Natural killer cell (primary cell): ENCODE measurements at regions of chr15 and their contacts with region 1.

Region 1: GRCh38 chr15:67839929-67840748 is at the start of gene RNU6-1:
- DNase-seq: peak; percentile 94 to 98
- ATAC-seq: peak; percentile 85 to 97 (median 92)
- H3K4me3 ChIP-seq: peak within 1 kb of the TSS; percentile 96
- H3K4me3 Mint-ChIP-seq: peak within 1 kb of the TSS; percentile 96
- H3K27ac ChIP-seq: peak within 1 kb of the TSS; percentile 97
- H3K27ac Mint-ChIP-seq: peak within 1 kb of the TSS; percentile 99
- H3K4me1 ChIP-seq: peaks cover 32% of the 10 kb centered on the region
- H3K4me1 Mint-ChIP-seq: peaks cover 35 to 41% of the 10 kb centered on the region in 2 donors
- H3K27me3 ChIP-seq: peaks cover 13% of the 10 kb centered on the region
- H3K27me3 Mint-ChIP-seq: peaks cover 16 to 20% of the 10 kb centered on the region in 2 donors
- CTCF ChIP-seq: no peak
- total RNA-seq, gene RNU6-1: not detected

Region 2: GRCh38 chr15:67254238-67255175 is 585.6 kb before region 1 on chr15 and contains the starts of genes AAGAB and IQCH:
- intact Hi-C with region 1: loop called (anchors 5 kb)
- DNase-seq: peak; percentile 96 to 97
- ATAC-seq: peak; percentile 92 to 99 (median 95)
- H3K4me3 ChIP-seq: peak within 1 kb of the TSS; percentile 89
- H3K4me3 Mint-ChIP-seq: peak within 1 kb of the TSS; percentile 99
- H3K27ac ChIP-seq: peak within 1 kb of the TSS; percentile 87
- H3K27ac Mint-ChIP-seq: peak within 1 kb of the TSS; percentile 95 to 98
- H3K4me1 ChIP-seq: peaks cover 15% of the 10 kb centered on the region
- H3K4me1 Mint-ChIP-seq: peaks cover 39 to 41% of the 10 kb centered on the region in 2 donors
- H3K27me3 ChIP-seq: no peaks in the 10 kb centered on the region
- H3K27me3 Mint-ChIP-seq: peaks cover 3 to 10% of the 10 kb centered on the region in 2 donors
- CTCF ChIP-seq: no peak
- total RNA-seq, gene AAGAB: 41.1 to 44.3 (median 42.5) TPM
- total RNA-seq, gene IQCH: 0.78 to 1.4 (median 0.86) TPM

Region 3: GRCh38 chr15:67501177-67501835 is 338.8 kb before region 1 on chr15:
- intact Hi-C with region 1: loop called (anchors 1 kb)
- DNase-seq: peak in 1 of 2 donors; percentile 41
- ATAC-seq: peak in 1 of 3 donors; percentile 45
- H3K4me3 ChIP-seq: no peak overlapping the region
- H3K4me3 Mint-ChIP-seq: no peak overlapping the region
- H3K27ac ChIP-seq: no peak overlapping the region
- H3K27ac Mint-ChIP-seq: no peak overlapping the region
- H3K4me1 ChIP-seq: no peaks in the 10 kb centered on the region
- H3K4me1 Mint-ChIP-seq: no peaks in the 10 kb centered on the region
- H3K27me3 ChIP-seq: no peaks in the 10 kb centered on the region
- H3K27me3 Mint-ChIP-seq: no peaks in the 10 kb centered on the region
- CTCF ChIP-seq: no peak

Region 4: DNA sequence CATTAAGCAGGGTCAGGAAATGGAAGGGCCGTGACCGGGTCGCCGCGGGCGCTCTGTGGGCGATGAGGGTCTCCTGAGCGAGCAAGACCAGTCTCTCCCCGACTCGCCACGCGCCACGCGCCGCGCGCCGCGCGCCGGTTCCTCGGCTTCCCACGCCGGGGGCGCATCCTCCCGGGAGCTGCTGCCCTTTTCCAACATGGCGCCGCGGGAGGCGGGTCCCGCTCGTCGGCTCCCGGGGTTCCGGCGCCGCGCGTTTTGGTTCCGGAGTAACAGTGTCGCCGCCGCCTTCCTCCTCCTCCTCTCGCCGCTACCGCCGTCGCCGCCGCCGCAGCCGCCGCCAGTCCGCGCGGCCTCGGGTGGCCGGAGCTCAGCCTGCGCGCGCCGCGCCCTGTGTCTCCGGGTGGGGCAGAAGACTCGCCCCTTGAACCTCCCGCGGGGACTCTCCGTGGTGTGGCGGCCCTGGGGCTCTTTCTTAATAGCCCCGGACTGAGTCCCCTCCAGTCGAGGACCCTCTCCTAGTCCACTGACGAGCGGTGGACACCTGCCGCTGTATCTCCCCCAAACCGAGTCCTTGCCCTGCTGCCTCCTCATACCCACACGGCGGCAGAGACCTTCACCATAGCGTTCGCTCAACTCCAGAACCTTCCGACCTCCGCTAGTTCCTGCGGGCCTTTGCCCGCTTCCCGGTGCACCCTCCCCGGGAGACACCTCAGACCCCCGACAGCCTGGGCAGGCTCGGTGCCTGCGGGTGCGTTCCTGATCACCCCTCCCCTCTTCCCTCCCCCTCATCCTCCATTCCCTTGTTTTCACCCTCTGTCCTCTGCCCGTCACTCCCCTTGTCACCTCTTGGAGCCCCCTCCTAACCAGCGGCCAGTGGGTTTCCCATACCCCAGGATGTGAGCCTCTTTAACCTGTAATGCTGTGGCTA is 297.5 kb before region 1 on chr15 and contains the start of gene MAP2K5:
- intact Hi-C with region 1: loop called (anchors 2 kb)
- DNase-seq: peak; percentile 75 to 90
- ATAC-seq: peak; percentile 75 to 83 (median 81)
- H3K4me3 ChIP-seq: peak within 1 kb of the TSS; percentile 68
- H3K4me3 Mint-ChIP-seq: peak within 1 kb of the TSS; percentile 96
- H3K27ac ChIP-seq: peak within 1 kb of the TSS; percentile 79
- H3K27ac Mint-ChIP-seq: peak within 1 kb of the TSS; percentile 95 to 96
- H3K4me1 ChIP-seq: peaks cover 13% of the 10 kb centered on the region
- H3K4me1 Mint-ChIP-seq: peaks cover 33 to 40% of the 10 kb centered on the region in 2 donors
- H3K27me3 ChIP-seq: no peaks in the 10 kb centered on the region
- H3K27me3 Mint-ChIP-seq: no peaks in the 10 kb centered on the region
- CTCF ChIP-seq: no peak
- total RNA-seq, gene MAP2K5: 25.6 to 32.6 (median 29.2) TPM

Region 5: DNA sequence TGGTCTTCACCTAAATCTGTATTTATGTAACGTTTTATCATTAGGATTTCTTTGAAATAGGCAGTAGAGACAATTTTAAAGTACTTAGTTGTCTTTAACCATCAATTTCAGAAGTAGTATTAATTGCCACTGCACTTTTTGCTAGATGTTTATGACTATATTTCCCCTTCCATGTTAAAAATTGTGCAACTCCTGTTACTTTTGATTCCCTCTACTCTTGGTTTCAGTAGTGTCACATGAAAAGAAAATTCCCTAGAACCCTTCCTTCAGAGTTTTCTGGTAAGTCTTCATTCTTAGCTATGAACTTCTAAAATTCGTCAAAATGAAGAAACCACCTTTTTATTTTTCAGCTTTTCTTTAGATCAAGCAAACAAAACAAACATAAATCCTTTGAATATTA is 221.0 kb after region 1 on chr15:
- intact Hi-C with region 1: no loop called
- DNase-seq: no peak
- ATAC-seq: no peak
- H3K4me3 ChIP-seq: no peak overlapping the region
- H3K4me3 Mint-ChIP-seq: no peak overlapping the region
- H3K27ac ChIP-seq: no peak overlapping the region
- H3K27ac Mint-ChIP-seq: peak overlapping the region; percentile 19 to 77
- H3K4me1 ChIP-seq: peaks cover 2% of the 10 kb centered on the region
- H3K4me1 Mint-ChIP-seq: peaks cover 47 to 55% of the 10 kb centered on the region in 2 donors
- H3K27me3 ChIP-seq: no peaks in the 10 kb centered on the region
- H3K27me3 Mint-ChIP-seq: no peaks in the 10 kb centered on the region
- CTCF ChIP-seq: no peak

Region 6: DNA sequence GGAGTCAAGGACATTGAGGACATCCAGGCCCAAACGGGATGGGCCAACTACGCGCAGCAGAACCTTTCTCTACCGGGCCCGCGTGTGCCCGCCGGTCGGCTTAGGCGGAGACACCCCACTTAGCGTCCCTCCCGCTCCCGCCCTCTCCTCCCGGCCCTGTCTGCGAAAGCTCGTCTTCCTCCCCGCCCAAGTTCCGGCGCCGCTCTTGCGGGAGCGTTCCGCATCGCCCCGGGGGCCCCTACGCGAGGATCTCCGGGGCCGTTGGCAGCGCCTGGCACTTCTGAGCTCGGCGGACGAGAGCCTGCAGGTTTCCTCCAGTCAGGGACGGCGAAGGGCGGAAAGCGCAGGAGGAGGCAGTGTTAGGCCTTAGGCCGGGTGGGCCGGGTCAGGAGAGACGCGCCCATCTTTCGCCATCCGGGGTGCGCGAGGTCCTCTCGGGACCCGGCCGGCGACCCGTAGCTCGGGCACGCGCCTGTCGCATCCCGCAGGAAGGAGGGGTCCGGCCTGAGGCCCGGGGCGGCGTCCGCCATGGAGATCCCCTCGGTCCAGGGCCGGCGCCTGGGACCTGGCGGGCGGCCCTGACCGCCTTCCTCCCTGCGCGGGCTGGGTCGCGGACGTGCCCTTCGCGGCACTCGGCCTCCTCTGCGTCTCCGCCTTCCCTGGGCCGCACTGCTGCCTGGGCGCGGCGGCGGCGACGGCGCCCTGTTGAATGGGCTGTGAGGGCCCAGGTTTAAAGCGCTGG is 437.6 kb after region 1 on chr15 and contains the start of gene FEM1B:
- intact Hi-C with region 1: loop called (anchors 5 kb)
- DNase-seq: peak; percentile 89 to 95
- ATAC-seq: peak; percentile 79 to 93 (median 82)
- H3K4me3 ChIP-seq: peak within 1 kb of the TSS; percentile 72
- H3K4me3 Mint-ChIP-seq: peak within 1 kb of the TSS; percentile 94
- H3K27ac ChIP-seq: peak within 1 kb of the TSS; percentile 89
- H3K27ac Mint-ChIP-seq: peak within 1 kb of the TSS; percentile 96 to 98
- H3K4me1 ChIP-seq: peaks cover 33% of the 10 kb centered on the region
- H3K4me1 Mint-ChIP-seq: peaks cover 51% of the 10 kb centered on the region in 2 donors
- H3K27me3 ChIP-seq: no peaks in the 10 kb centered on the region
- H3K27me3 Mint-ChIP-seq: no peaks in the 10 kb centered on the region
- CTCF ChIP-seq: no peak
- total RNA-seq, gene FEM1B: 57.4 to 73.5 (median 67.9) TPM